Activated CD4-positive, alpha-beta T cell treated with anti-CD3 and anti-CD28 coated beads for 36 hours (primary cell): ENCODE measurements at regions of chr13 and their contacts with region 1.

Region 1: GRCh38 chr13:109145631-109146030 is 516.2 kb downstream of the MYO16 start:
- DNase-seq: peak; percentile 31
- ATAC-seq: peak; percentile 49
- H3K4me3 Mint-ChIP-seq: no peak overlapping the region
- H3K27ac Mint-ChIP-seq: no peak overlapping the region
- H3K4me1 Mint-ChIP-seq: no peaks in the 10 kb centered on the region
- H3K27me3 Mint-ChIP-seq: peaks cover 29% of the 10 kb centered on the region

Region 2: GRCh38 chr13:109087916-109088623 is 57.6 kb before region 1 on chr13:
- CTCF ChIA-PET with region 1: no interaction called
- POLR2A ChIA-PET with region 1: no interaction called
- intact Hi-C with region 1: no loop called
- DNase-seq: no peak
- ATAC-seq: no peak
- H3K4me3 Mint-ChIP-seq: no peak overlapping the region
- H3K27ac Mint-ChIP-seq: no peak overlapping the region
- H3K4me1 Mint-ChIP-seq: no peaks in the 10 kb centered on the region
- H3K27me3 Mint-ChIP-seq: peaks cover 6% of the 10 kb centered on the region

Region 3: GRCh38 chr13:109162248-109163053 is 16.8 kb after region 1 on chr13:
- CTCF ChIA-PET with region 1: no interaction called
- POLR2A ChIA-PET with region 1: no interaction called
- intact Hi-C with region 1: no loop called
- DNase-seq: peak; percentile 74
- ATAC-seq: peak; percentile 98
- H3K4me3 Mint-ChIP-seq: no peak overlapping the region
- H3K27ac Mint-ChIP-seq: no peak overlapping the region
- H3K4me1 Mint-ChIP-seq: peaks cover 8% of the 10 kb centered on the region
- H3K27me3 Mint-ChIP-seq: peaks cover 19% of the 10 kb centered on the region

Region 4: GRCh38 chr13:109226631-109227030 is 81.0 kb after region 1 on chr13:
- CTCF ChIA-PET with region 1: no interaction called
- POLR2A ChIA-PET with region 1: no interaction called
- intact Hi-C with region 1: no loop called
- DNase-seq: no peak
- ATAC-seq: no peak
- H3K4me3 Mint-ChIP-seq: no peak overlapping the region
- H3K27ac Mint-ChIP-seq: no peak overlapping the region
- H3K4me1 Mint-ChIP-seq: no peaks in the 10 kb centered on the region
- H3K27me3 Mint-ChIP-seq: peaks cover 9% of the 10 kb centered on the region

Region 5: DNA sequence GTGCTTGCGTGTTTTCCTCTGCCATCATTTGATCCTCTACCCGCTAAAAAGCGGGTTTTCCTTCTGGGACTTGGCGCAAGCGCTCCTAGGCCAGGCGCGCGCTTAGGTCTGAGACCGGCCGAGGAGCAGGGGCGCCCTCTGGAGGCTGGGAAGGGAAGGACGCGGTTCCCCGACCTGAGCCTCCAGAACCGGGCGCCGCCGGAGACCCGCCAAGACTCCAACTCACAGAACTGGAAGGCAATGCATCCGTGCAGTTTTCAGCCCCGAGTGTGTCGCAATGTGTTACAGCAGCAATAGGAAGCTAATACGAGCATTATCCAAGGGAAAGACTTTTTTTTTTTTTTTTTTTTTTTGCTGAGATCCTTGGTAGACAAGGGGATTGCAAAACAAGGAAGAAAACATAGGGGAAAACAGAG is 970.4 kb after region 1 on chr13:
- CTCF ChIA-PET with region 1: no interaction called
- POLR2A ChIA-PET with region 1: no interaction called
- intact Hi-C with region 1: loop called (anchors 5 to 10 kb)
- DNase-seq: peak; percentile 78
- ATAC-seq: peak; percentile 70
- H3K4me3 Mint-ChIP-seq: no peak overlapping the region
- H3K27ac Mint-ChIP-seq: no peak overlapping the region
- H3K4me1 Mint-ChIP-seq: peaks cover 2% of the 10 kb centered on the region
- H3K27me3 Mint-ChIP-seq: peaks cover 34% of the 10 kb centered on the region